ENCODE measurements at regions of chr19 and their contacts with region 1.

Region 1: DNA sequence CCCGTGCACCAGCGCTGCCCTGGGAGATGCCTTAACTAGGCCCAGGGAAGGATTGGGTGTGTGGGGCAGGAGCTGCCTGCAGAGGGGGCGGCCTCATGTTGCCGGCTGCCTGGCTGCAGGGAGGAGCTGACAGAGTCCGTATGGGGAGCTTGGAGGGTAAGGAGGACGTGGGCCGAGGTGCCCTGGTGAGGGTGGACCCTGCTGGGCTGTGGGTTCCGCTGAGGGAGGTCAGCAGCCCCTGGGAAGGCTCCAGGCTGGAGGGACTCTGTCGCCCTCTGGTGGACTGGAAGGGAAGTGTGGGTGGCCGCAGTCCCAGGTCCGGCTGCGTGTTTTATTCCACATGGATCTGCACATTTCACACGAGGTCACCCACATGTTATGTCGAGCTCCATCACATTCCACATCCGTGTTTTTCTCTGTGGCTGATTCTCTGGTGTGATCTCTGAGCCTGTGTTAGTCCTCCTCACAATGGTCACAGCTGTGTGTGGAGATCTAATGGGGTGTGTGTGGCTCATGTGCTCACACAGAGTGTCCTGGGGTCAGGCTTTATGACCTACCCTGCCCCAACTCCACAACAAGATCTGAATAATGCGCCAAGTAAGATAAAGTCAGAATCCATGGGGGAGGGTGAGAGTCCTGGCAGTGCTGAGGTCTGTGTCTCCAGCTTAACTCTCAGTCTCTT is 1.8 kb upstream of the CEACAM8 start:
- DNase-seq: peak; percentile 43
- ATAC-seq: peak; percentile 65
- H3K4me3 Mint-ChIP-seq: no peak overlapping the region
- H3K27ac Mint-ChIP-seq: no peak overlapping the region
- H3K4me1 Mint-ChIP-seq: no peaks in the 10 kb centered on the region
- H3K27me3 Mint-ChIP-seq: peaks cover 11% of the 10 kb centered on the region
- CTCF ChIP-seq: peak; percentile 98

Region 2: GRCh38 chr19:42563352-42564210 is 33.0 kb before region 1 on chr19:
- CTCF ChIA-PET with region 1: interaction called, 18 read pairs
- POLR2A ChIA-PET with region 1: no interaction called
- intact Hi-C with region 1: no loop called
- DNase-seq: peak; percentile 36
- ATAC-seq: peak; percentile 86
- H3K4me3 Mint-ChIP-seq: no peak overlapping the region
- H3K27ac Mint-ChIP-seq: no peak overlapping the region
- H3K4me1 Mint-ChIP-seq: peaks cover 3% of the 10 kb centered on the region
- H3K27me3 Mint-ChIP-seq: peaks cover 14% of the 10 kb centered on the region
- CTCF ChIP-seq: peak; percentile 71

Region 3: GRCh38 chr19:42606660-42607351 is 10.3 kb after region 1 on chr19:
- CTCF ChIA-PET with region 1: interaction called, 14 read pairs
- POLR2A ChIA-PET with region 1: no interaction called
- intact Hi-C with region 1: no loop called
- DNase-seq: peak; percentile 78
- ATAC-seq: peak; percentile 51
- H3K4me3 Mint-ChIP-seq: no peak overlapping the region
- H3K27ac Mint-ChIP-seq: no peak overlapping the region
- H3K4me1 Mint-ChIP-seq: no peaks in the 10 kb centered on the region
- H3K27me3 Mint-ChIP-seq: peaks cover 13% of the 10 kb centered on the region
- CTCF ChIP-seq: peak; percentile 87

Region 4: DNA sequence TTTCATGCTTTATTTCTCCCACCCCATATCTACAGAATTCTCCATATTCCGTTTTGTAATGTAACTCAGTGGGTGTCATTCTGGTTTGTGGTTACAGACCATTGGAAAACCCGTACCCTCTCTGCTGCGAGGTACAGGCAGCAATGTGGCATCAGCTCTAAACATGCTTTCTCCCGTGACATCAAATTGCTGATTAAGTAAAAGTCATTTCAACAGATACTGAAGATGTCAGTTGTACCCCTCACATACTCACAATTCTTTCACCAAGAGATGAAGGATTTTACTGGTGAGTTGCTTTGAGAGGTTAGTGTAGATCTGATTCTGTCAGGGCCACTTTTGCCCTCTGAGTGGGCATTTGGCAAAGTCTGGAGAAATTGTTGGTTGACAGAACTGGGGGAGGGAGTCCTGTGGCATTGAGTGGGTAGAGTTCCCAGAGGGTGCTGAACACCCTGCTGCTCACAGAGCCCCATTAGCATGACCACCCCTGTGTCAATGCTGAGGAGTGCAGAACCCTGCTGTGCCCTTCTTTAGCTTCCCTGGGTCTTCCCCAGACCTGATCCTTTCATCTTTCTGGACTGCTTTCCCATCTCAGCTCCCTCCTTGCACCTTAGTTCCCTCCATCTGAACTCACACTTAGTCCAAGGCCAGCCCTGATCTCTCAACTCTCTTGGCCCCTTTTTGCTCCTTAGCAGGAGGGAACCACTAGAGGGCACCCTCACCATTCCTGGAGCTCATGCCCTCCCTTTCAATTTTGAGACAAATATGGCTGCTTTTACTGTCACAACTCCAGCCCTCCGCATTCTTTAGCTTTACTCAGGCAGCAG is 38.1 kb after region 1 on chr19:
- CTCF ChIA-PET with region 1: interaction called, 10 read pairs
- POLR2A ChIA-PET with region 1: no interaction called
- intact Hi-C with region 1: no loop called
- DNase-seq: peak; percentile 68
- ATAC-seq: peak; percentile 51
- H3K4me3 Mint-ChIP-seq: no peak overlapping the region
- H3K27ac Mint-ChIP-seq: peak overlapping the region; percentile 10
- H3K4me1 Mint-ChIP-seq: peaks cover 7% of the 10 kb centered on the region
- H3K27me3 Mint-ChIP-seq: peaks cover 13% of the 10 kb centered on the region
- CTCF ChIP-seq: peak; percentile 78